ENCODE measurements at regions of chr7 and their contacts with region 1.

Region 1: DNA sequence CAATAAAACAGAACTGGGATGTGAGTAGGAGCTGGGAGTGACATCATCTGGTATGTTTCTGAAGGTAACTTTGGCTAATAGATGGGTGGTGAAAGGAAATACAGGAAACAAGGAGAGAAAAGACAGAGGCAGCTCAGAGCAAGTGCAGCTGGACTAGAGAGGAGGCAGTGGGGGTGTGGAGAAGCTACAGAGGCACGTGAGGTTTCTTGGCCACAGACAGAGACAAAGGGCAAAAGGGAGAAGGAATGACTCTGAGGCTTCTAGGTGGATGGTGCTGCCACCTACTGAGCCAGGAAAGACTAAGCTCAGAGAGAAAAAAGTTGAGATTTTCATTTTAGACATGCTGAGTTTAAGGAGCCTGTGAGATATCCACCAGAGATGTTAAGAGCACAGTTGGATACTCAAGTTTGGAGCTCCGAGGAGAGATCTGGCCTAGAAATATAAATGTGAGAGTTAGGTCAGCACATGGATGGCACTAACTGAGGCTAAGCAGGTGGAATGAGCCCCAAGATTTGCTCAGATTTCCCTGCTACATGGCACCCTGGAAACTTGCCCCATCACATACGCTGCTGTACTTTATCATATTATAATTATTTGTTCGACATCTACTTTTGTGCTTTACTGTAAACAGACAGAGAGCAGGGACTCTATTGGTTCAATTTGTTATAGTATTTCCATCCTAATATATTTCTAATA is 293.0 kb upstream of the IMMP2L start:
- DNase-seq: peak in 2 of 3 donors; percentile 51 to 72
- ATAC-seq: peak; percentile 94
- H3K4me3 ChIP-seq: no peak overlapping the region
- H3K4me1 ChIP-seq: peaks cover 11% of the 10 kb centered on the region
- CTCF ChIP-seq: peak; percentile 28

Region 2: DNA sequence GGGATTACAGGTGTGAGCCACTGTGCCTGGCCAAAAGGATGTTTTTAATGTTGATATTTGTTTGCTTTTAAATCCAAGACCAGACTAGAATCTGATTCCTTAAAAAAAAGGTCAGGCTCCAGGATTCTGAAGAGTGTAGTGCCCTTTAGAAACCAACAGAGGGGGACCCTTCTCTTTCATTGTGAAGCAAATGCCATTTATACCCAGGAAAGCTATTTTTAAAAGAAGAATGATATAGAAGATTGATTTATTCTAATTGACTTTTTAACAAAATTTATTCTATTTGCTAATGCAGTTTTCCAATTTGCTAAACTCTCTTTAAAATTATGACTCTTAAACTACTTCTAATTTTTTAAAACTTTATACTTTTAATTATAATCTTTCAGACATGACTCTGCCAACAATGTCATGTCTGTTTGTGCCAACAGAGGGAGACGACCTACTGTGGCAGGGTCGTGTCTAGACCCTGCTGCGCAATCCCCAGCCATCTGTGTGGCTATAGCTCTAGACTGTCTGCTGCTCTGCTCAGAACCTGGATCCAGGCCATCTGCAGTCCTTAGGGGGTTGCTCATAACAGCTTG is 92.0 kb before region 1 on chr7:
- intact Hi-C with region 1: loop called in 1 of 2 experiments (anchors 10 kb)
- DNase-seq: peak in 1 of 3 donors; percentile 6
- ATAC-seq: peak; percentile 49
- H3K4me3 ChIP-seq: no peak overlapping the region
- H3K4me1 ChIP-seq: no peaks in the 10 kb centered on the region
- CTCF ChIP-seq: no peak

Region 3: GRCh38 chr7:112112822-112113255 is 257.5 kb after region 1 on chr7:
- intact Hi-C with region 1: no loop called
- DNase-seq: no peak
- ATAC-seq: peak; percentile 23
- H3K4me3 ChIP-seq: no peak overlapping the region
- H3K4me1 ChIP-seq: no peaks in the 10 kb centered on the region
- CTCF ChIP-seq: no peak

Measured in mucosa of descending colon (tissue), 3 donors.